PC-9 (cell line): ENCODE measurements at regions of chr15 and their contacts with region 1.

Region 1: DNA sequence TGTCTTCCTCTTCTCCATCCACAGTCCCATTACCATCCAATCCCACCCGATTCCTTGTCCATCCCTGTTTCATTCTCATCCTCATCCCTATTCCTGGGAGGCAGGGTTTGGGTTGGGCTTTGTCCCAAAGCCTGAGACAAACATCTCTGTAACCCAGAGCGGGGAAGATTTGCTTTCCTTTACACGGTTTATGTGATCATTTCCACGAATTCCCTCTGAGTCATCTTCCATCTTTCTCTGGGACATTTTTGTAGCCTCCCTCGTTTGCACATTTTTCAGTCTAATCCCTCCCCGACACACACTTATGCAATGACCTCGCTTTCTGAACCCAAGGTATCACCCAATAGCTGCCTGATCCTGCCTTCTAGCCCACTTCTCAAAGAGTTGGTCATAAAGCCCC is 22.8 kb downstream of the DUOX2 start:
- DNase-seq: no peak
- H3K4me3 ChIP-seq: no peak overlapping the region
- H3K27ac ChIP-seq: no peak overlapping the region
- H3K4me1 ChIP-seq: no peaks in the 10 kb centered on the region
- H3K27me3 ChIP-seq: peaks cover 3% of the 10 kb centered on the region; the same call in 1 of the 2 replicates
- CTCF ChIP-seq: no peak

Region 2: GRCh38 chr15:45134682-45135604 is 43.8 kb after region 1 on chr15:
- CTCF ChIA-PET with region 1: interaction called, 12 read pairs
- POLR2A ChIA-PET with region 1: no interaction called
- intact Hi-C with region 1: no loop called
- DNase-seq: no peak
- H3K4me3 ChIP-seq: no peak overlapping the region
- H3K27ac ChIP-seq: no peak overlapping the region
- H3K4me1 ChIP-seq: no peaks in the 10 kb centered on the region
- H3K27me3 ChIP-seq: no peaks in the 10 kb centered on the region
- CTCF ChIP-seq: no peak

Region 3: DNA sequence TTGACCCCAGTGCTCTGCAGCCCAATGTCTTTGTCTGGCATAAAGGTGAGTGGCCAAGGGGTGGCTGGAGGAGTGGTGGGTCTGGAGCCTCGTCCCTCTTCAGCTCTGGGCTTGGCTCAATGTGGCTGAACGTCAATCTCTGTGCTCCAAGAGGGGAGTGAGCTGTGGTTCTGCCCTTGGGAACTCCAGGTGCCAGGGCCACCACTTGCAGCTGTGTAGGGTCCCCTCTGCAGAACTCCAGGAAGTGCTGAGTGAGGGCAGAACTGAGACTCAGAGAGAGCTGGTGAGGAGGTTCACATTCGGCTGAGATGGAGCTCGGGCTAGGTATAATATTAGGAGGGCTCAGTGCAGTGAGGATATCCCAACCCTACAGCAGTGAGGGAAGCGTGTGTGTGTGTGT is 50.2 kb after region 1 on chr15:
- CTCF ChIA-PET with region 1: interaction called, 12 read pairs
- POLR2A ChIA-PET with region 1: interaction called, 10 read pairs
- intact Hi-C with region 1: no loop called
- DNase-seq: no peak
- H3K4me3 ChIP-seq: no peak overlapping the region
- H3K27ac ChIP-seq: no peak overlapping the region
- H3K4me1 ChIP-seq: peaks cover 6% of the 10 kb centered on the region
- H3K27me3 ChIP-seq: no peaks in the 10 kb centered on the region
- CTCF ChIP-seq: no peak